WTC11 (cell line): ENCODE measurements at regions of chr3 and their contacts with region 1.

Region 1: GRCh38 chr3:14203521-14204079 is 25.0 kb downstream of the LSM3 start:
- DNase-seq: peak; percentile 60
- ATAC-seq: peak; percentile 81
- H3K4me3 Mint-ChIP-seq: no peak overlapping the region
- H3K27ac Mint-ChIP-seq: peak overlapping the region; percentile 74; the same call in 1 of the 2 replicates
- H3K4me1 Mint-ChIP-seq: peaks cover 5% of the 10 kb centered on the region; the same call in 1 of the 2 replicates
- H3K27me3 Mint-ChIP-seq: no peaks in the 10 kb centered on the region
- CTCF ChIP-seq: peak; percentile 71; the same call in 1 of the 2 replicates

Region 2: GRCh38 chr3:13648060-13649001 is 555.3 kb before region 1 on chr3:
- CTCF ChIA-PET with region 1: no interaction called
- POLR2A ChIA-PET with region 1: no interaction called
- DNase-seq: peak; percentile 96
- ATAC-seq: peak; percentile 77
- H3K4me3 Mint-ChIP-seq: no peak overlapping the region
- H3K27ac Mint-ChIP-seq: peak overlapping the region; percentile 93
- H3K4me1 Mint-ChIP-seq: peaks cover 20% of the 10 kb centered on the region
- H3K27me3 Mint-ChIP-seq: peaks cover 7% of the 10 kb centered on the region
- CTCF ChIP-seq: peak; percentile 96

Region 3: DNA sequence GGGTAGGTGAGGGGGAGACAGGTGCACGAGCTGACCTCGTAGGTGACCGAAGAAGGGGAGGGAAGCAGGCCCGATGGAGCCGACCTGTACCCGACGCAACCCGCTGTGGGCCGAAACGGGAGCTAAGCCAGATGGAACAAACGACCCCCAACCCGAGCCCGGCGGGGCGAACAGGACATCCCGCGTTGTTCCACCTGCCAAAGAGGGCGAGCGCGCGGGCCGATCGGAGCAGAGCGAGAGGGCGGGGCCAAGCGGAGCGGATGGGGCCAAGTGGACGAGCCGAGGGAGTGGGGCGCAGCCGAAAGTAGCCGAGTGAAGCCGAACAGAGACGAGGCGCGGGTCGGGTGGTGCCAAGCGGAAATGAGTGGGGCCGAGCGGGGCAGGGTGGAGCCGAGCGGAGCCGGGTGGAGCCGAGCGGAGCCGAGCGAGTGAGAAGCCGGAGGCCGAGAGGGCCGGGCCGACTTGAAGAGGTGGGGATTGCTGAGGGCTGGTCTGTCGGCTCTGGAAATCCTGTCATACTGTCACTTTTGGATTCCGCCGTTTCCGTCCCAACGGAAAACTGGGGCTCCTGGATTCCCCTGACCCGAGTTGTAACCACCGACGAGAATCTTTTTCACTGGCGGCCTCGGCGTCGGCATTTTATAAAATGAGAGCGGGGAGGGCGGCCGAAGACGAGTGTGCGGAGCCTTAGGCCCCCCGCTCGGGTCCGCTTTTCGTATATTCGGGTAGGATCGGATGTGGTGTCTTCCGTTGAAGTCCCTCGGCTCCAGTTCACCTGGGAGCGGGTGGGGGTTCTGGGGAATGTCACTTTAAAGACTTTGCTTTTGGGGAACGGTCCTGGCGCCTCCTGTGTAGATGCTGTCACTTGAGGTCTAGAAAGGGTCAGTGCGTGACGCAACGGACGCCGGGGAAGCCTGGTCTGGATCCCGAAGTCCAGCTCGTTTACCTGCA is 308.2 kb before region 1 on chr3:
- CTCF ChIA-PET with region 1: interaction called, 23 read pairs
- POLR2A ChIA-PET with region 1: no interaction called
- DNase-seq: peak; percentile 98
- ATAC-seq: peak; percentile 99
- H3K4me3 Mint-ChIP-seq: peak overlapping the region; percentile 89
- H3K27ac Mint-ChIP-seq: no peak overlapping the region
- H3K4me1 Mint-ChIP-seq: peaks cover 13% of the 10 kb centered on the region
- H3K27me3 Mint-ChIP-seq: peaks cover 32% of the 10 kb centered on the region
- CTCF ChIP-seq: no peak

Region 4: DNA sequence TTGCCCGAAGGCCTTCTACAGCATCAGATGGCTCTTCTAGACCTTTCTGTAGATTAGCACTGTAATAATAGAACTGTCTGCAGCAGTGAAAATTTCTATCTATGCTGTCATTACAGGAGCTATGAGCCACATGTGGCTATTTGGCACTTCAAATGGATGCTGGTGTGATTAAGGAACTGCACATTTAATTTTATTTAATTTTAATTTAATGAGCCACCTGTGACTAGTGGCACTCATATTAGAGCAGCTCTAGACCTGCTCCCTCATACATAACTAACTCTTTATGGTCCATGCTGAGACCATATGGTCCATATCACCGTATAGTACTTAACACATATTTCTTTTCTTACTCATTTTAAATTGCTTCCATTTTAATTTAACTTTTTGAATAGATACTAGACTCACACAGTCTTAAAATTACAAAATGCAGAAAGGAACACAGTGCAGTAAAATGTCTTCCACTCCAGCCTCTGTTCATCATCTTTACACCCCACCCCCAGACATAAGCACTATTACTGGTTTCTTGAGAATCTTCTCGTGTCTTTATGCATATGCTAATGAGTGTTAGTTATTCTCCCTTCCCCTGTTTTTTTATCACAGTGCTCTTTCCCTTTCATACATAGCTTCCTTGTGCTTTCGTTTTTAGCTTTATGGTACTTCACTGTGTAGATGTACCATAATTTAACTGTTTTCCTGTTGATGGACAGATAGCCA is 15.4 kb before region 1 on chr3:
- CTCF ChIA-PET with region 1: interaction called, 10 read pairs
- POLR2A ChIA-PET with region 1: no interaction called
- DNase-seq: no peak
- ATAC-seq: no peak
- H3K4me3 Mint-ChIP-seq: no peak overlapping the region
- H3K27ac Mint-ChIP-seq: no peak overlapping the region
- H3K4me1 Mint-ChIP-seq: peaks cover 13% of the 10 kb centered on the region
- H3K27me3 Mint-ChIP-seq: no peaks in the 10 kb centered on the region
- CTCF ChIP-seq: no peak

Region 5: GRCh38 chr3:14253022-14253706 is 49.6 kb after region 1 on chr3:
- CTCF ChIA-PET with region 1: interaction called, 24 read pairs
- POLR2A ChIA-PET with region 1: no interaction called
- DNase-seq: no peak
- ATAC-seq: no peak
- H3K4me3 Mint-ChIP-seq: no peak overlapping the region
- H3K27ac Mint-ChIP-seq: no peak overlapping the region
- H3K4me1 Mint-ChIP-seq: peaks cover 5% of the 10 kb centered on the region
- H3K27me3 Mint-ChIP-seq: peaks cover 8% of the 10 kb centered on the region
- CTCF ChIP-seq: no peak

Region 6: GRCh38 chr3:14391033-14391432 is 187.4 kb after region 1 on chr3:
- CTCF ChIA-PET with region 1: interaction called, 17 read pairs
- POLR2A ChIA-PET with region 1: no interaction called
- DNase-seq: no peak
- ATAC-seq: no peak
- H3K4me3 Mint-ChIP-seq: no peak overlapping the region
- H3K27ac Mint-ChIP-seq: no peak overlapping the region
- H3K4me1 Mint-ChIP-seq: peaks cover 24% of the 10 kb centered on the region
- H3K27me3 Mint-ChIP-seq: peaks cover 3% of the 10 kb centered on the region; the same call in 1 of the 2 replicates
- CTCF ChIP-seq: no peak

Region 7: GRCh38 chr3:14467814-14468620 is 264.4 kb after region 1 on chr3:
- CTCF ChIA-PET with region 1: interaction called, 67 read pairs
- POLR2A ChIA-PET with region 1: interaction called, 4 read pairs
- DNase-seq: peak; percentile 55
- ATAC-seq: peak; percentile 65
- H3K4me3 Mint-ChIP-seq: no peak overlapping the region
- H3K27ac Mint-ChIP-seq: peak overlapping the region; percentile 68; the same call in 1 of the 2 replicates
- H3K4me1 Mint-ChIP-seq: peaks cover 16% of the 10 kb centered on the region
- H3K27me3 Mint-ChIP-seq: no peaks in the 10 kb centered on the region
- CTCF ChIP-seq: peak; percentile 94